T-cell (primary cell): ENCODE measurements at regions of chr2 and their contacts with region 1.

Region 1: GRCh38 chr2:161586517-161587167 is 37.6 kb upstream of the SLC4A10 start:
- DNase-seq: peak in 1 of 35 experiments; percentile 48
- ATAC-seq: no peak
- H3K4me3 ChIP-seq: no peak overlapping the region
- H3K4me3 Mint-ChIP-seq: no peak overlapping the region
- H3K27ac ChIP-seq: no peak overlapping the region
- H3K27ac Mint-ChIP-seq: no peak overlapping the region
- H3K4me1 ChIP-seq: no peaks in the 10 kb centered on the region
- H3K4me1 Mint-ChIP-seq: no peaks in the 10 kb centered on the region
- H3K27me3 ChIP-seq: no peaks in the 10 kb centered on the region
- H3K27me3 Mint-ChIP-seq: peaks cover 4 to 6% of the 10 kb centered on the region in 2 donors

Region 2: DNA sequence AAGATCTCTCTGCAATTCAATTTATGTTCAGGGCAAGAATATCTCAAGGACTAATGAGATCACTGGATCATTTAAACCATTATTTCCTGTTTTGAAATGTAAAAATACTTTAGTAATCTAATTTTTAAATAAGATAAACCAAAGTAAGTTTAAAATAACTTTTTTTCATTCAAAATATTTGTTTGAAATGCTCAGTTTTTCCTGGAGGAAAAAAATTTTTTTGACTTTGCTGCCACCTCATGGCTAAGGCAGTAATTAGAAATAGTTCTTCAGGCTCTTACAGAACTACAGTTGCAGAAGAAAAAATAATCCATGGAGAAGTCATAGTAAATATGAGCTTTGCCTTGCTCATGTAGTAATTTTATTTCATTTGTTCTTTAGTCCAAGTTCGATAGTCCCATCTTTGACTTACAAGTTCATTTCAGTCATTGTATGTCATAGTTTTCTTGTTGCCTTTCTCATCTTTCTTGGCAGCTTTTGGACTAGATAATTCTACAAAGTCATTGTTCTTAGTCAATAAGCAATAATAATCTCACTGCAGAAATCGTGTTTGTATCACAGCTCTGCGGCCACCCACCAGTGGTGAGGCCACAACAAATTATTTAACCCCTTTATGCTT is 360.0 kb after region 1 on chr2:
- CTCF ChIA-PET with region 1: interaction called, 4 to 26 read pairs
- POLR2A ChIA-PET with region 1: no interaction called
- DNase-seq: peak in 1 of 35 experiments; percentile 48
- ATAC-seq: no peak
- H3K4me3 ChIP-seq: no peak overlapping the region
- H3K4me3 Mint-ChIP-seq: no peak overlapping the region
- H3K27ac ChIP-seq: no peak overlapping the region
- H3K27ac Mint-ChIP-seq: peak overlapping the region in 1 of 2 donors; percentile 45
- H3K4me1 ChIP-seq: no peaks in the 10 kb centered on the region
- H3K4me1 Mint-ChIP-seq: peaks cover 0 to 11% (median 6%) of the 10 kb centered on the region in 3 donors
- H3K27me3 ChIP-seq: no peaks in the 10 kb centered on the region
- H3K27me3 Mint-ChIP-seq: no peaks in the 10 kb centered on the region

Region 3: DNA sequence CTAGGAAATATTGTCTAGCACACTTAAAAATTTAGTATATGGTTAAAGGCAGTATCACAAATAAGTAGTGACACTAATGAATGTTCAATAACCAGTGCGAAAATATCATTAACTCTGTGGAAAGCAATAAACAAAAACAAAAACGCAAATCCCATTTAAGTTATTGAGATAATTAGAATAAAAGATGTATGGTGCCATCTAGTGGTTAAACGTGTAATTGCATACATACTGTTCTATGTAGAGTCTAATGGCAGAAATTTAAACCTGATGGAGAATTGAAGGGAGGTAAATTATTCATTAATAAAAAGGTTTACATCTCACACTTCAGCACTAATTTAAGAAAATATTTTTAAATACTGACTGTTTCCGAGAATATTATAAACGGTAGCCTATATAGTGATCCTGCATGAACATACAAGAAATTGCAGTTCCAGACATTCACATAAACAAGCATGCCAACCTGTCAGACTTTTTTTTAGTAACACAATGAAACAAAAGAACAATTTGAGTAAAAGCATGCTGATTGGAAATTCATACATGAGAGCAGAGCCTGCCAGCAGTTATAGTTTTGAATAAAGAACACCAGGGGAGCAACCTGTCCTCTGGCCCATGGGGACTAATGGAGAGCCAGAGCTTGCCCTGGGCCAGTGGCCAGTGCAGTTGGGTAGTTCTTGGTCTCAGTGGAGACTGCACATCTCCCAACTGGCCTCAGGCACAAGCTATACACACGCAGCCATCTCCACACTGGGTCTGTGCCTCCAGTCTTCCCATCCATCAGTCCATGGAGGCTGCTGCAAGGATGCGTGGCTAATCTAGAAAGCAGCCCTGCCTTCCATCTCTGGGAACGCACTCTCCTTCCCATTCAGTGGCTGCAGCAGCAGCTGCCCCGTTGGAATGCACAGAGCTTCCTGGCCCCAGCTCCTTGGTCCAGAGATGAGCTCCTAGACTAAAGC is 537.4 kb after region 1 on chr2:
- CTCF ChIA-PET with region 1: interaction called, 35 to 49 read pairs
- POLR2A ChIA-PET with region 1: interaction called in 1 of 2 experiments, 3 read pairs
- DNase-seq: peak in 1 of 35 experiments; percentile 84
- ATAC-seq: peak in 3 of 4 experiments; percentile 48 to 67 (median 59)
- H3K4me3 ChIP-seq: no peak overlapping the region
- H3K4me3 Mint-ChIP-seq: no peak overlapping the region
- H3K27ac ChIP-seq: no peak overlapping the region
- H3K27ac Mint-ChIP-seq: no peak overlapping the region
- H3K4me1 ChIP-seq: no peaks in the 10 kb centered on the region
- H3K4me1 Mint-ChIP-seq: peaks cover 9 to 18% (median 16%) of the 10 kb centered on the region in 3 donors
- H3K27me3 ChIP-seq: no peaks in the 10 kb centered on the region
- H3K27me3 Mint-ChIP-seq: no peaks in the 10 kb centered on the region